ENCODE measurements at regions of chr2 and their contacts with region 1.

Region 1: DNA sequence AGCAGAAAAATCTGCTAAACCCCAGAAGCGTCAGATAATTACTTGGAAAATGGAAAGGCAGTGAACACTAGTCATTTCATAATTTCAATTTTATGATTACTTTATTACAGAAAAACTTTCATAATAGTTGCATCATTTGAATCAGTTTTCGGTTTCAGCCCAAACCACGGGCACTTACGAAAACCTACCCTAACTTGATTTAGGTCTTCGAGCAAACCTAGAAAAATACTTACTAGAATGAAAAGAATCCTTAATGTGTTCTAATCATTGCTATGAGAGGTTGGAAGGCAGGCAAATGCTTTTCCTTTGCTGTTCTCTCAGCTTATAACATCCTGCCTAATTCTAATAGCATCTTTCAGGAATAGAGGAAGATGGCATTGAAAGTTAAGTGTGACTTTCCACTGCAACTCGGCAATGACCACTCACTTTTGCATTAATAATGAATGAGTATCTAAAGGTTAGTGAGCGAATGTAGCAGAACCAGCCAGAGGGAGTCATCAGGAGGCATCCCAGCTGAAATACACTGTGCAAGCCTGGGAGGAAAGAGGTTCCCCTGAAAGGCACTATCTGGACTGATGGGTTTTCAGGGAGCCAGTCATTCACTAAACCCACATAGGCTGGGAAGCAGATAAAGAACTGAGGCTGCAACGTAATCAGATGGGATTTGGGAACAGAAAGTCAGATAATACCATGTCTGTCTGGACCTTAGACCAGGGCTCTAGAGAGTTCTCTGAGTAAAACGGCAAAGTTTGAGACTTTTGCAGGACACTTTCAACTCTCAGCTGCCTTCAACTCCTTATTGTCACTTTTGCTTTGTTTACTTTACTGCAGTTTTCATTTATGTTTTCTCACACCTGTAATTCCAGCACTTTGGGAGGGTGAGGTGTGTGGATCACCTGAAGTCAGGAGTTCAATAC is 520.8 kb downstream of the RNF144A start:
- DNase-seq: no peak
- H3K4me3 ChIP-seq: no peak overlapping the region
- H3K27ac ChIP-seq: peak overlapping the region in 3 of 4 donors; percentile 68 to 75 (median 69)
- H3K4me1 ChIP-seq: peaks cover 0 to 32% (median 19%) of the 10 kb centered on the region in 4 donors
- H3K27me3 ChIP-seq: no peaks in the 10 kb centered on the region
- CTCF ChIP-seq: no peak
- EP300 ChIP-seq: no peak
- POLR2A ChIP-seq: no peak

Region 2: GRCh38 chr2:7517088-7517487 is 79.1 kb after region 1 on chr2:
- intact Hi-C with region 1: loop called (anchors 5 kb)
- DNase-seq: no peak
- H3K4me3 ChIP-seq: no peak overlapping the region
- H3K27ac ChIP-seq: peak overlapping the region in 3 of 4 donors; percentile 25 to 46 (median 29)
- H3K4me1 ChIP-seq: peaks cover 0 to 19% (median 18%) of the 10 kb centered on the region in 4 donors
- H3K27me3 ChIP-seq: no peaks in the 10 kb centered on the region
- CTCF ChIP-seq: no peak
- EP300 ChIP-seq: peak in 2 of 4 donors; percentile 18 to 33
- POLR2A ChIP-seq: no peak

Measured in sigmoid colon (tissue), 7 donors.